ENCODE measurements at regions of chr12 and their contacts with region 1.

Region 1: GRCh38 chr12:58668233-58668632 is 252.1 kb downstream of the LRIG3 start:
- DNase-seq: no peak
- H3K4me3 ChIP-seq: no peak overlapping the region
- H3K27me3 ChIP-seq: no peaks in the 10 kb centered on the region
- CTCF ChIP-seq: no peak

Region 2: GRCh38 chr12:58765653-58766512 is 97.7 kb after region 1 on chr12:
- CTCF ChIA-PET with region 1: no interaction called
- POLR2A ChIA-PET with region 1: interaction called, 11 read pairs
- DNase-seq: no peak
- H3K4me3 ChIP-seq: no peak overlapping the region
- H3K27me3 ChIP-seq: no peaks in the 10 kb centered on the region
- CTCF ChIP-seq: no peak

Measured in BJ (cell line).